Right cardiac atrium (tissue), 5 donors: ENCODE measurements at regions of chr3 and their contacts with region 1.

Region 1: DNA sequence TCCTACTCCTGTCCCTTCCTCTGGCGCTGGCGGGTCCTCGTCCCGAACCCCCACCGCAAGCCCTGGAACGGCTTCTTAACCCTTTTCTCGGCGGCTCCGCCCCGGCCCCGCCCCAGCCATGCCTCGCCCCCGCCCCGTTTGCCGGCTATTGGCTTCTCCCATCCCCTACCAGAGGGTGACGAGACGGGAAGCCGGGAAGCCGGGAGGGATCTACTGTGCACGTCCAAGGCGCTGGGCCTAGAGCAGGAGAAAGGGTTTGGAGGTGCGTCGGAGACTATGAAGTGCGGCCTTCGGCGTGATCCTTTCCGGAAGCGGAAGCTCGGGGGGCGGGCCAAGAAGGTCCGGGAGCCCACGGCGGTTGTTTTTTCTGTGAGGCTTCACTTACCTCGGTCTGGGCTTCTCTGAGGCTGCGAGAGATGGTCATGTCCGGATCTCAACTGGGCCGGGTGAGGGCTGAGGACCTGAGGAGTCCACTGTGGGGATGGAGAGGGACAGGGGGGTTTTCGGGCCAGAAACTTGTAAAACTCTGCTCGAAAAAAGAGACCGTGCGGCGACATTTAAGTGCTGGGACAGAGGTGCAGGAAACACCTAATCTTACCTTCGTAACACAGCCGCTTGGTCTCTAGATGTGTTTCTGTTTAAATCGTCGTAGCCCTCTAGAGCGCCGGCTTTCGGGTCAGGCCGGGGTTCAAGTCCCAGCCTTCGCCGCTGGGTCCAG is 21.4 kb downstream of the ROPN1B start:
- DNase-seq: peak; percentile 90 to 97 (median 96)
- ATAC-seq: peak; percentile 99 to 100
- H3K4me3 ChIP-seq: peak overlapping the region; percentile 74
- H3K27ac ChIP-seq: peak overlapping the region; percentile 79
- H3K4me1 ChIP-seq: no peaks in the 10 kb centered on the region
- H3K27me3 ChIP-seq: no peaks in the 10 kb centered on the region

Region 2: GRCh38 chr3:126083913-126084767 is 93.7 kb after region 1 on chr3 and contains the start of gene SLC41A3:
- intact Hi-C with region 1: loop called in 1 of 4 experiments (anchors 5 kb)
- DNase-seq: peak; percentile 93 to 97 (median 97)
- ATAC-seq: peak; percentile 99
- H3K4me3 ChIP-seq: peak within 1 kb of the TSS; percentile 89
- H3K27ac ChIP-seq: peak within 1 kb of the TSS; percentile 38
- H3K4me1 ChIP-seq: no peaks in the 10 kb centered on the region
- H3K27me3 ChIP-seq: no peaks in the 10 kb centered on the region
- total RNA-seq, gene SLC41A3: 30.9 to 38.9 (median 37.0) TPM